BJ (cell line): ENCODE measurements at regions of chr11 and their contacts with region 1.

Region 1: DNA sequence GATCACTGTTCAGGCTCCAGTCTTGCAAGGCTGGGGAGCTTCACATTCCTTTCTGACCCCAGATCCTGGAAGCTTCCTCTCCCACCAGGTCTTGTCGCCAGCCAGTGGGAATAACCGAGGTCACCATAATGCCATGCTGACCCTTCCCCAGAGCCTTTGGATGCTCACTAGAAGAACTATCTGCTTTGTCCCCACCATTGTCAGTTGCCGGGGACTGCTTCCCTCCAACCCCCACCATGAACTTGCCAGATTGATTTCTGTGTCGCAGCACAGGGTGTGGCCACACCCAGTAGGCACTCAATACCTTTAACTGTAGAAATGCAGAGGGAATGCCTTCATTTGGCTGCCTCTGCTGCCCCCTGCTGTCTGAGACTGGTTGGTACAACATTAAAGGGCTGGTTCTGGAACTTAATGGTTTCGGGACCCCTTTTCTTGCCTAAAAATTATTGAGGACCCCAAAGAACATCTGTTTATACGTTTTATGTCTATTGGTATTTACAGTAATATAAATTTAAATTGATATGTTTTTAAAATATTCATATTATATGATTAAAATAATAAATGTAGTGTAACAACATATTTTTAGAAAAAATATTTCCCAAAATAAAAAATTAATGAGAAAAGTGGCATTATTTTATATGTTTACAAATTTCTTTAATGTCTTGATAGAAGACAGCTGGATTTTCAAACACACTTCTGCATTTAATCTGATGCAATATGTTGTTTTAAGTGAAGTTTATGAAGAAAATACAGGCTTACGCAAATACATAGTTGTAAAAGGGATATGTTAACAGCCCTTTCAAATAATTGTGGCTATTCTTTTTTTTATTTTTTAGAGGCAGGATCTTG is 6.7 kb upstream of the GDPD5 start:
- DNase-seq: no peak
- H3K4me3 ChIP-seq: no peak overlapping the region
- H3K27me3 ChIP-seq: peaks cover 7% of the 10 kb centered on the region; the same call in 1 of the 2 replicates
- CTCF ChIP-seq: peak; percentile 79

Region 2: DNA sequence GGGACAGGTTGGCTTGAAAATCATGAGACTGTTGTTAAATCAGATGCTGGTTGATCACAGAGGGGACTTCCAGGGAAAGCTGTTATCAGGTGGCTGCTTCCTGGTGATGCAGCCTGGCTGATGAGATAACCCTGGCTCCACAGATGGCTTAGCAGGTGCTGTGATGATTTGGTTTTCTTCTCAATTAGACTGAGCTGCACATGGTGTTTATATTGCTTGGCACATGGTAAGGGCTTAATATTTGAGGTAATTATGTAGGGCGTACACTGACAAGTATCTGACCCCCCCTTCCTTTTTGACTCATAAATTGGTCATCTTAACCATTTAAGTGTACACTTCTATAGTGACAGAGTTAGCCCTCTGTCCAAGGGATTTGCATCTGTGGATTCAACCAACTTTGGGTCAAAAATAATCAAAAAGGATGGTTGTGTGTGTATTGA is 126.1 kb before region 1 on chr11:
- CTCF ChIA-PET with region 1: interaction called, 40 read pairs
- POLR2A ChIA-PET with region 1: no interaction called
- DNase-seq: no peak
- H3K4me3 ChIP-seq: no peak overlapping the region
- H3K27me3 ChIP-seq: no peaks in the 10 kb centered on the region
- CTCF ChIP-seq: no peak

Region 3: DNA sequence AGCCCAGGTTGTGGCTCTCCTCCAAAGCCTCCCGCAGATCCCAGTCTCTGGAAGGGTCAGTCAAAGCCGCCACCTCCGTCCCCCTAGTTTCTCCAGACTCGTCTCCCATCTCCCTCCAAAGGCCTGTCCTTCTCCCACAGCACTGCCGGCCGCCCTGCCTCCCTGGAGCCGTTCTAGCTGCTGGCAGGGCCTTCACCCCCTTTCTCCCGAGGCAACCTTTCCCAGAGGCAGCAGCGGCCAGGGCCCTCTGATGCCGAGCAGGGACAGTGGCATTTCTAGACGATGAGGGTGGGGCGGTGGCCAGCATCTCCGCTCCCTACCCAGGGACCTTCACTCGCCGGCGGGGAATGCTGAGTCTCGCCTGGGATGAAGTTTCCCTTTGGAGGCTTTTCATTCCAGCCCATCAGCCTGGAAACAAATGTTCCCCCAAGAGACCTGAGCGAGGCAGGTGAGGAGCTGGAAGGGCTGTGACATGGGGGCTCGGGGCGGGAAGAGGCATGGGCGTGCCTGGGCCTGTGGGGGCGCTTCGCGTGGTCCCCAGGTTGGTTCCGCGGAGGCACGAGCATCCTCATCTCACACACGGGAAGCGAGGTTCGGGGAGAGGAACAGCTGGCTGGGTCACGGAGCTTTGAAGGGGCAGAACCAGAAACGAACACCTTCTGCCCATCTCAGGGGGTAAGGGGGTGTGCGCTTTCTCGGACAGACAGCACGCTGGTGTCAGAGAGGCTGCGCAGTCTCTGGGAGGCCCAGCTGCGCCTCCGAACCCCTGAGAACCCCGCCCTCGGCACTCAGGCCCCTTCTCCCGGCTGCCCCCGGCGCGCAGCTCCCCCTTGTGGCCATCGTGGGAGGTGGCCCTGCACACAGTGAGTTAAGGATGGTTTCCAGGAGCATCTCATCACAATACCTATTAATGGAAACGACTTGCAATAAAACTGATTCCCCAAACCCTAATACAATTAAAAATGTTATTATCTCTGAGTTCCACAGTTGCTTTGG is 81.3 kb before region 1 on chr11:
- CTCF ChIA-PET with region 1: interaction called, 168 read pairs
- POLR2A ChIA-PET with region 1: no interaction called
- DNase-seq: no peak
- H3K4me3 ChIP-seq: no peak overlapping the region
- H3K27me3 ChIP-seq: no peaks in the 10 kb centered on the region; the same call in 1 of the 2 replicates
- CTCF ChIP-seq: peak; percentile 57

Region 4: GRCh38 chr11:75547580-75548058 is 15.2 kb after region 1 on chr11:
- CTCF ChIA-PET with region 1: interaction called, 11 read pairs
- POLR2A ChIA-PET with region 1: interaction called, 3 read pairs
- DNase-seq: no peak
- H3K4me3 ChIP-seq: no peak overlapping the region
- H3K27me3 ChIP-seq: peaks cover 5% of the 10 kb centered on the region
- CTCF ChIP-seq: peak; percentile 83

Region 5: DNA sequence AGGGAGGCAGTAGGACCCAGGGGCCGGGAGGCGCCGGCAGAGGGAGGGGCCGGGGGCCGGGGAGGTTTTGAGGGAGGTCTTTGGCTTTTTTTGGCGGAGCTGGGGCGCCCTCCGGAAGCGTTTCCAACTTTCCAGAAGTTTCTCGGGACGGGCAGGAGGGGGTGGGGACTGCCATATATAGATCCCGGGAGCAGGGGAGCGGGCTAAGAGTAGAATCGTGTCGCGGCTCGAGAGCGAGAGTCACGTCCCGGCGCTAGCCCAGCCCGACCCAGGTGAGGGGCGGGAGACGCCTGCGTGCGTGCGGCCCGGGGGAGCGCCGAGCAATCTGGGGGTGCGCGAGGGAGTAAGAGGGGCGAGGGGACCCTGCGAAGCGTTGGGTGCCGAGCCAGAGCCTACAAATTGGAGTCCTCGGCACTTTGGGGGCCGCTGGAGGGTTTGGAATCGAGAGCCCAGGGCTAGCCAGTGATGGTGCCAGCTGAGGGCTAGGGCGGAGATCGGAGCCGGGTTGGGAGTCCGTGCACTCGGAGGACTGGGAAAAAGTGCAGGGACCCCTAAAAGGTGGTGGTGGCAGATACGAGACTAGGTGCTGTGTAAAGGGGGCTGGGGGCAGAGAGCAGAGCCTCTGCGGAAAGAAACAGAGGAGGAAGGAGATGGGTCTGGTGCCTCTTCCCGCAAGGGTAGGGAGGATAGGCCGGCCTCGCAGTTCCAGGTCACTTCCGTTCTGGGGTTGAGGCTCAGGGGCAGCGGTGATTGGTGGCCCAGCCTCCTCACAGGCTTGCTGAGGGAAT is 29.8 kb after region 1 on chr11 and contains the start of gene SERPINH1:
- CTCF ChIA-PET with region 1: no interaction called
- POLR2A ChIA-PET with region 1: no interaction called
- DNase-seq: no peak
- H3K4me3 ChIP-seq: peak within 1 kb of the TSS; percentile 96
- H3K27me3 ChIP-seq: no peaks in the 10 kb centered on the region
- CTCF ChIP-seq: no peak
- polyA plus RNA-seq, gene SERPINH1: 1,158 and 1,604 TPM in 2 replicates

Region 6: DNA sequence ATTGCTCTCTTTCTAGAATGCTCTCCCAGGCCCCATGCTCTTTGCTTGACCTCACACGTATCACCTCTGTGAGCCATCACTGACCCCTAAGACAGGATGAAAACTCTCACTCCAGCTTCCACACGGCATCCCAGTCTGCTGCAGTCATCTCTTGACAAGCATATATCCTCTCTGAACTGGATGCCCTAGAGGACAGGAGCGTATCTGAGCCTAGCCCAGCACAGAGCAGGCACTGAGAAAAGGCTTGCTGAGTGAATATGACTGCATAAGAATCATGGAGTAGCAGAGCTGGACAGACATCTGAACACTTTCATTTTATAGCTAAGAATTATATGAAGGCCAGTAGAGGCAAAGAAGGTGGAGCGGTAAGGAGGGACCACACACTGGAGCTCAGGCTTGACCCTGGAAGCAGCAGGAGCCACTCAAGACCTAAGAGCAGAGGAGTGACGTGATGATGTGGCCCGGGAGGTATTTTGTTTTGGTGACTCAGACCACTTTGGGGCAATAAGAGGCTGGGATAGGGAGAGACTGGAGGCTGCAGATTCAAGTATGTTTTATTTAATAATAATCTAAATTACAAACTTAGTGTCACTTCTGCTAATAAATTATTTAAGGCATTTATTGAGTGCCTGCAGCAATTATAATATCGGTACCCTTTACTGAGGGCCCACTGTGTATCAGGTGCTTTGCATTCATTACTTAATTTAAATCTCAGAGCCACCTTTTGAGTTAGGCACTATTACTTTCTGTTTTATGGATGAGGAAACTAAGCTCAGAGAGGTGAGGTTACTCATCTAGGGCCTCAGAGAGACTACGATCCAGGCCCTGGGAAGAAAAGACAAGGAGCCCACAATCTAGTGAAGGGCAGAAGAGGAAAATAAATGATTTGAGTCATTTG is 93.8 kb after region 1 on chr11:
- CTCF ChIA-PET with region 1: no interaction called
- POLR2A ChIA-PET with region 1: no interaction called
- DNase-seq: peak; percentile 57
- H3K4me3 ChIP-seq: no peak overlapping the region
- H3K27me3 ChIP-seq: no peaks in the 10 kb centered on the region
- CTCF ChIP-seq: no peak

Region 7: DNA sequence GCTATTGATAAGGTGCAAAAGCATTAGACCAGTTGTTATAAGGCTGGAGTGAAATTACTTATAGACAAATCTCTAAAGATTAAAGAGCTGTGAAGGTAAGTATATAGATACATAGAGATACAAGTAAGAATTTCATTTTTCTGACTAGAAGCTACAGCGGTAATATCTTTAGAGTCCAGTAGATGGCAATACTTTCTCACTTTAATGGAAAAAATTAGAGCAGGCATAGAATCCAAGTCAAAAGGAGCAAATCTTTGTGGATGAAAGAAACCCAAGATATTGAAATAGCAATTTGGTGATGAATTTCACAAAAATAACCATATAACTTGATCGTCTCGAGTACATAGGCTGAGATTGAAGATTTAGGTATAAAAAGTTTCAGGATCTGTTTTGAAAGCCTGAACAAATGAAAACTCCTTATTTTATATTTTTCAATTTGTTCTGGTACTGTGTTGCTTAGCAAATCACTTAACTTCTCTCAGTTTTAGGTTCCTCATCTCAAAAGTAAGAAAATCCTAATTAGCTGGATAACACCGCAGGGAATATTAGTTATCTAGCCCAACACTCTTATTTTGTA is 364.5 kb after region 1 on chr11:
- CTCF ChIA-PET with region 1: no interaction called
- POLR2A ChIA-PET with region 1: no interaction called
- DNase-seq: no peak
- H3K4me3 ChIP-seq: no peak overlapping the region
- H3K27me3 ChIP-seq: no peaks in the 10 kb centered on the region
- CTCF ChIP-seq: peak; percentile 53

Region 8: GRCh38 chr11:76166314-76166713 is 633.9 kb after region 1 on chr11:
- CTCF ChIA-PET with region 1: no interaction called
- POLR2A ChIA-PET with region 1: no interaction called
- DNase-seq: no peak
- H3K4me3 ChIP-seq: no peak overlapping the region
- H3K27me3 ChIP-seq: peaks cover 4% of the 10 kb centered on the region
- CTCF ChIP-seq: no peak